ENCODE measurements at regions of chr4 and their contacts with region 1.

Region 1: DNA sequence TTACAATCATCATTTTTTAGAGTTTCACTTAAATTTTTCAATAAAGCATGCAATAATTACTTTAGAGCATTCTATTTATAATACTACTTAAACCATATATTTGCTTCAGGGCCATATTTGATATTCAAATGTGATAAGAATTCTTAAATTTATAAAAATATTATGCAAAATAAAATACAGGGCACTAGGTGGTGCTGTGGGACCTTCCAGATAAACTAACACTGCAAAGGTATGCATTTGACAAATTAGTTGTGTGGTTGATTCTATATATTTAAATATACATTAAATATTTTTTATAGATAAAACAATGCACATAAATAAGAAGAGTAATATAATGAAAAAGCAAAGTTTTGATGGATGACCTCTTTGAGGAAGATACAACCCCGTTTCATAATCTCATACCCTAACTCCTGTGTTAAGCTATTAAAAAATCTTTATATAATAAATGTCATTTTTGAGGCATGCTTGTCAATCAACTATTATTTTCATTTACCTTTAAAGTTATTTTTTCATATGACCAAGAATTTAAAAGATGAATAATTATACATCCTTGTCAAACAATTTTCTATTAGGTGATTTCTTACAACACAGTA is 128.4 kb downstream of the REELD1 start:
- DNase-seq: peak; percentile 77
- H3K4me3 ChIP-seq: no peak overlapping the region
- H3K27ac ChIP-seq: peak overlapping the region; percentile 76
- H3K4me1 ChIP-seq: peaks cover 82% of the 10 kb centered on the region
- H3K27me3 ChIP-seq: no peaks in the 10 kb centered on the region
- CTCF ChIP-seq: peak; percentile 64

Region 2: GRCh38 chr4:145956288-145956890 is 386.3 kb before region 1 on chr4:
- CTCF ChIA-PET with region 1: no interaction called
- POLR2A ChIA-PET with region 1: no interaction called
- intact Hi-C with region 1: loop called (anchors 5 kb)
- DNase-seq: peak; percentile 64
- H3K4me3 ChIP-seq: no peak overlapping the region
- H3K27ac ChIP-seq: no peak overlapping the region
- H3K4me1 ChIP-seq: no peaks in the 10 kb centered on the region
- H3K27me3 ChIP-seq: no peaks in the 10 kb centered on the region
- CTCF ChIP-seq: peak; percentile 89

Region 3: DNA sequence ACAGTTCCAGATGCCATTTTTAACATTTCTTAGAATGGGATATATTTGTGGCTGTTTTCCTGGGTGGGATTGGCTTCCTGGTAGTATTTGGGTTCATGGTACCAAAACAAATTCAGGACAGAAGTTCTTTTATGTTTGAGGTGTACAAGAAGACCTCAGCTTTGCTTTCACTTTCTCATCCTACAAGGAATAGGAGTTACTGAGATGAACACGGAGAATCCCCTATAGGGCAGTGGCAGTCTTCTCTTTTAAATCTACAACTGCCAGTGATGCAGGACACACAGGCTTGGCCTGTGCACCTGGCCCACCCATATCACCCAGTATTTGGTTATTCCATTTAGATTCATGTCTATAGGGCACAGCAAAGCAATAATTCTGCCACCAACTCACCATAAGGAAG is 143.9 kb after region 1 on chr4:
- CTCF ChIA-PET with region 1: interaction called, 4 read pairs
- POLR2A ChIA-PET with region 1: no interaction called
- intact Hi-C with region 1: loop called (anchors 1 kb)
- DNase-seq: no peak
- H3K4me3 ChIP-seq: no peak overlapping the region
- H3K27ac ChIP-seq: peak overlapping the region; percentile 98
- H3K4me1 ChIP-seq: peaks cover 58% of the 10 kb centered on the region
- H3K27me3 ChIP-seq: no peaks in the 10 kb centered on the region
- CTCF ChIP-seq: no peak

Region 4: GRCh38 chr4:146585761-146586333 is 243.2 kb after region 1 on chr4:
- CTCF ChIA-PET with region 1: interaction called, 7 read pairs
- POLR2A ChIA-PET with region 1: no interaction called
- intact Hi-C with region 1: loop called (anchors 5 kb)
- DNase-seq: peak; percentile 92
- H3K4me3 ChIP-seq: no peak overlapping the region
- H3K27ac ChIP-seq: peak overlapping the region; percentile 71
- H3K4me1 ChIP-seq: peaks cover 30% of the 10 kb centered on the region
- H3K27me3 ChIP-seq: no peaks in the 10 kb centered on the region
- CTCF ChIP-seq: no peak

Region 5: DNA sequence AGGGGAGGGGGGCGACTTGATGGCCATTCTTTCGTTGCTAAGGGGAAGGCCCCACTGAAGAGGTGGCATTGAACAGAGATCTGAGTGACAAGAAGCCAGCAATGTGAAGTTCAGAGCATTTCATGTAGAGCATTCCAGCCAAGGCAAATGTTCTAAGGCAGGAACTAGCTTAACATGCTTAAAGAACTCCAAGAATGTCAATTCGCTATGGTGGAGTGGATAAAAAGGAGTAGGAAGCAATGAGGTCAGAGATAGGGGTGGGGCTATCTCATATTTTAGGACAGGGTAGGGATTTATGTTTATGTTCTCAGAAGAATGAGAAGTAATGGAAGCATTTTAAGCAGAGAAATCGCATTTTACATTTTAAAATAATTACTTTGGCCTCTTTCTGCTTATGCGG is 472.1 kb after region 1 on chr4:
- CTCF ChIA-PET with region 1: no interaction called
- POLR2A ChIA-PET with region 1: no interaction called
- intact Hi-C with region 1: loop called (anchors 10 kb)
- DNase-seq: peak; percentile 79
- H3K4me3 ChIP-seq: no peak overlapping the region
- H3K27ac ChIP-seq: no peak overlapping the region
- H3K4me1 ChIP-seq: peaks cover 14% of the 10 kb centered on the region
- H3K27me3 ChIP-seq: no peaks in the 10 kb centered on the region
- CTCF ChIP-seq: no peak

Region 6: DNA sequence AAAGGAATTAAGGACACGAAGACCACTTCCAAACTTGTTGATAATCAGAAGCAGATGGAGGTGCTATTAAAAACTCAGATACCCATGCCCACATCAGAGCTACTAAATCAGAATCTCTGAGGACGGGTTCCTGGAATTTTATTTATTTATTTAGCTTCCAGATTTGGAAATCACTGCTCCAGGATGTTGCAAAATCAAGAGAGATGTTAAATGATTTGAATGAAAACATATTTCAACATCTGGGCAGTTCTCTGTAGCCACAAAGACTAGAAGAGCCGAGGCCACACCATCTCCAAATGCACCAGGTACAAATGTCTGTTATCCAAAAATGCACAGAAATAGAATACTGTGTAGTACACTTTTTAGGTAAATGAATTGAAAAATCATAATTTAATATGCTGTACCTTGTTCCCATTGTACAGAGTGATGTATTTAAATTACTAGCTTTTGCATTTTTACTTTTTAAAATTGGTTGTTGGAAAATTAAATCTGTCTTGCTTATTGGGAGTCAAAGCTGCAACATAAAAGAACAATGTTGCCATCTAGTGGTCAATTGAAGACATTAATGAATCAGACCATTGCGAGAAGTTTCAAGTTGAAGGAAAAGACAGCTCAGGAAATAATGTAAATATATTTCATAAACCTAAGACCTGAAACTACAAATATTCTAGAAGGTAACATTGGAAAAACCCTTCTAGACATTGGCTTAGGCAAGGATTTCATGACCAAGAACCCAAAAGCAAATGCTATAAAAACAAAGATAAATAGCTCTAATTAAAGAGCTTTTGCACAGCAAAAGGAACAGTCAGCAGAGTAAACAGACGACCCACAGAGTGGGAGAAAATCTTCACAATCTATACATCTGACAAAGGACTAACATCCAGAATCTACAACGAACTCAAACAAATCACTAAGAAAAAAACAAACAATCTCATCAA is 754.2 kb after region 1 on chr4:
- CTCF ChIA-PET with region 1: interaction called, 8 read pairs
- POLR2A ChIA-PET with region 1: no interaction called
- intact Hi-C with region 1: loop called (anchors 5 kb)
- DNase-seq: peak; percentile 71
- H3K4me3 ChIP-seq: no peak overlapping the region
- H3K27ac ChIP-seq: no peak overlapping the region
- H3K4me1 ChIP-seq: no peaks in the 10 kb centered on the region
- H3K27me3 ChIP-seq: no peaks in the 10 kb centered on the region
- CTCF ChIP-seq: peak; percentile 72